Common myeloid progenitor, CD34-positive (primary cell): ENCODE measurements at regions of chr6 and their contacts with region 1.

Region 1: DNA sequence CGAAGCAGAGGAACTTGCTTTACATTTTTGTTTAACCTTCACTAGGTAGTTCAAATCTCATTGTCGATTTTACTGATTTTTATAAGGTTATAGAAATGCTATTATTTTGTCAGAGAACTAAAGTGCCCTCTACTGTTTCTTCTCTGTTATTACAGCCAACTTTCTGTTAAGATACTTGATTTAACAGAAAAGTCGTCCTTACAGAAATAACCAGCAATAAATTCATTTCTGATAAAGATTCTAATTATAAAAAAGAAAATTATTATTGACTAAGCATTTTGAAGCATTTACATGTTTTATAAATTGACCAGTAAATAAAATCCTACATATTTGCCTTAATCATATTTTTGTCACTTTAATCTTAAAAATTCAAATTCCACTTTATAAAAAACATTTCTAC is 60.8 kb downstream of the OGFRL1 start:
- DNase-seq: peak; percentile 38 to 63 (median 54)
- H3K4me3 ChIP-seq: no peak overlapping the region
- H3K27ac ChIP-seq: no peak overlapping the region
- H3K4me1 ChIP-seq: peaks cover 0 to 6% (median 0%) of the 10 kb centered on the region in 4 experiments
- H3K27me3 ChIP-seq: no peaks in the 10 kb centered on the region

Region 2: GRCh38 chr6:71190809-71191208 is 158.6 kb before region 1 on chr6:
- CTCF ChIA-PET with region 1: interaction called, 30 read pairs
- POLR2A ChIA-PET with region 1: no interaction called
- DNase-seq: peak; percentile 47 to 69 (median 59)
- H3K4me3 ChIP-seq: no peak overlapping the region
- H3K27ac ChIP-seq: no peak overlapping the region
- H3K4me1 ChIP-seq: peaks cover 6 to 15% (median 11%) of the 10 kb centered on the region in 4 experiments
- H3K27me3 ChIP-seq: no peaks in the 10 kb centered on the region

Region 3: GRCh38 chr6:71197780-71198179 is 151.6 kb before region 1 on chr6:
- CTCF ChIA-PET with region 1: interaction called, 30 read pairs
- POLR2A ChIA-PET with region 1: no interaction called
- DNase-seq: no peak
- H3K4me3 ChIP-seq: no peak overlapping the region
- H3K27ac ChIP-seq: no peak overlapping the region
- H3K4me1 ChIP-seq: no peaks in the 10 kb centered on the region
- H3K27me3 ChIP-seq: no peaks in the 10 kb centered on the region